ENCODE measurements at regions of chr20 and their contacts with region 1.

Region 1: DNA sequence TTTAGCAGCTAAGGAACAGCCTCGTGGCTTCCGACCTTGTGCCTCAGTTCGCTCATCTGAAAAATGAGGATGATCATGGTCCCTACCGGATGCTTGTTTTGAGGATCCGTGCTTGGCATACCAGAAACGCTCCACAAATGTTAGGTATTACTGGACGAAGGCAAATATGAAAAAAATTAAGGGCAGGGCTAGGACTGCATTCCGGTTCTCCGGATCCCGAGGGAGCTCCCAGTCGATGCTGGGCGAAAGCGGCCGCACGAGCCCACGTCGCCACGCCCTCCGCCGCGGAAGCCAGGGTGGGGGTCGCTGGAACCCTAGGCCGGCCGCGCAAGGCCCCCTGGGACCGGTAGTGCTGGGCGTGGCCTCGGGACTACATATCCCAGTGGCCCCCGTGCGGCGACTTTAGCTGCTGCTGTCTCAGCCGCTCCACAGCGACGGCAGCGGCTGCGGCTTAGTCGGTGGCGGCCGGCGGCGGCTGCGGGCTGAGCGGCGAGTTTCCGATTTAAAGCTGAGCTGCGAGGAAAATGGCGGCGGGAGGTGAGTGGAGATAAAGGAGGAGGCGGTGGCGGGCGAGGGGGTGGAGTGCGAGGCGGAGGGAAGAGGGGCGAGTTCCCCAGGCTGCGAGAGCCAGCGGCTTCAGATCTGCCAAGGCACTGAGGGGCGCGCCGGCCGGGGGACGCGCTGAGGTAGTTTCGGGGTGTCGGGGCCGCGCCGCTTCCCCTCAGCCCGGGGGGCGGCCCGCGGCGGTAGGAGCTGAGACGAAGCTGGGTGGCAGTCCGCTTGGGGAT is at the start of gene NCOA3:
- DNase-seq: peak; percentile 93
- ATAC-seq: peak; percentile 91
- H3K4me3 ChIP-seq: peak within 1 kb of the TSS; percentile 90 to 99 (median 97)
- H3K4me3 Mint-ChIP-seq: peak within 1 kb of the TSS; percentile 100
- H3K27ac ChIP-seq: peak within 1 kb of the TSS; percentile 90 to 95
- H3K27ac Mint-ChIP-seq: peak within 1 kb of the TSS; percentile 100
- H3K4me1 ChIP-seq: peaks cover 28 to 33% of the 10 kb centered on the region in 2 donors
- H3K4me1 Mint-ChIP-seq: peaks cover 48% of the 10 kb centered on the region
- H3K27me3 ChIP-seq: no peaks in the 10 kb centered on the region
- H3K27me3 Mint-ChIP-seq: no peaks in the 10 kb centered on the region
- CTCF ChIP-seq: peak; percentile 59
- total RNA-seq, gene NCOA3: 289 and 309 TPM in 2 replicates

Region 2: GRCh38 chr20:47196091-47197081 is 305.3 kb before region 1 on chr20:
- CTCF ChIA-PET with region 1: no interaction called
- POLR2A ChIA-PET with region 1: no interaction called
- intact Hi-C with region 1: loop called (anchors 10 kb)
- DNase-seq: peak; percentile 81
- ATAC-seq: peak; percentile 82
- H3K4me3 ChIP-seq: peak overlapping the region in 2 of 5 experiments; percentile 12 to 33
- H3K4me3 Mint-ChIP-seq: peak overlapping the region; percentile 16
- H3K27ac ChIP-seq: no peak overlapping the region
- H3K27ac Mint-ChIP-seq: no peak overlapping the region
- H3K4me1 ChIP-seq: peaks cover 3 to 7% of the 10 kb centered on the region in 2 donors
- H3K4me1 Mint-ChIP-seq: peaks cover 5% of the 10 kb centered on the region
- H3K27me3 ChIP-seq: no peaks in the 10 kb centered on the region
- H3K27me3 Mint-ChIP-seq: no peaks in the 10 kb centered on the region
- CTCF ChIP-seq: peak; percentile 100

Region 3: GRCh38 chr20:47418061-47418912 is 83.4 kb before region 1 on chr20:
- CTCF ChIA-PET with region 1: interaction called, 46 read pairs
- POLR2A ChIA-PET with region 1: interaction called, 56 read pairs
- intact Hi-C with region 1: loop called (anchors 1 kb)
- DNase-seq: no peak
- ATAC-seq: no peak
- H3K4me3 ChIP-seq: no peak overlapping the region
- H3K4me3 Mint-ChIP-seq: no peak overlapping the region
- H3K27ac ChIP-seq: peak overlapping the region; percentile 97 to 99
- H3K27ac Mint-ChIP-seq: peak overlapping the region; percentile 99
- H3K4me1 ChIP-seq: peaks cover 59 to 73% of the 10 kb centered on the region in 2 donors
- H3K4me1 Mint-ChIP-seq: peaks cover 67% of the 10 kb centered on the region
- H3K27me3 ChIP-seq: no peaks in the 10 kb centered on the region
- H3K27me3 Mint-ChIP-seq: no peaks in the 10 kb centered on the region
- CTCF ChIP-seq: no peak

Region 4: DNA sequence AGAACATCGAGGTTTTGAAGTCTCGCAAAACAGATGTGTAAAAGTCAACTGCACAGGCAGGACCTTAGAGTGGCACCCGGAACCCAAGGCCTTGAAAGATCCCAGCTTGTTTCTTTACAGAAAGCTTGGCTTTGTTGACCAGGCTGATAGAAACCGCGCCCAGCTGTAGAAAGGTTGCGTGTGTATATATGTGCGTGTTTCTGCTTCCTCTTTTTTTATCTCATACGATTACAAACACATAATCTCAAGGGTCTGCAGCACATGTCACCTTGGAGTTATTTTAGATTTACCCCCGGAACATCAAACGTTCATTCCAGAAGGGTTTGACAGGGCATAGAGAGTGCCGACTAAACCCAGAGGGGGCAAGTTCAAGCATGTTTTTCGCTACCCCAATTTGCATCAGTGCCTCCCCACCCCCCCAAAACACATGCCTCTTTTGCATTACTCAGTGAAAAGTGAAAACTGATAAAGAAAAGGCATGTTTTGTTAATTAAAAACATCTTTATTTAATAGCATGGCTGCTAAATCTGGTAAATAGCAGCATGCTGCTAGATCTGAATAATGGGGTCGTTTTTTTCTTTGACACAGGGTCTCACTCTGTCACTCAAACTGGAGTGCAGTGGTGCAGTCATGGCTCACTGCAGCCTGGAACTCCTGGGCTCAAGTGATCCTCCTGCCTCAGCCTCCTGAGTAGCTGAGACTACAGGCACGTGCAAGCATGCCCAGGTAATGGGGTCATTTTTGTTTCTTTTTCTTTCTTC is 33.2 kb before region 1 on chr20:
- CTCF ChIA-PET with region 1: interaction called, 7 read pairs
- POLR2A ChIA-PET with region 1: interaction called, 22 read pairs
- intact Hi-C with region 1: loop called (anchors 1 kb)
- DNase-seq: peak; percentile 84
- ATAC-seq: peak; percentile 81
- H3K4me3 ChIP-seq: peak overlapping the region in 2 of 5 experiments; percentile 8 to 38
- H3K4me3 Mint-ChIP-seq: peak overlapping the region; percentile 68
- H3K27ac ChIP-seq: peak overlapping the region; percentile 66 to 79
- H3K27ac Mint-ChIP-seq: peak overlapping the region; percentile 95
- H3K4me1 ChIP-seq: peaks cover 42 to 55% of the 10 kb centered on the region in 2 donors
- H3K4me1 Mint-ChIP-seq: peaks cover 48% of the 10 kb centered on the region
- H3K27me3 ChIP-seq: no peaks in the 10 kb centered on the region
- H3K27me3 Mint-ChIP-seq: no peaks in the 10 kb centered on the region
- CTCF ChIP-seq: no peak

Region 5: GRCh38 chr20:47561180-47561579 is 59.5 kb after region 1 on chr20:
- CTCF ChIA-PET with region 1: no interaction called
- POLR2A ChIA-PET with region 1: no interaction called
- intact Hi-C with region 1: loop called (anchors 5 kb)
- DNase-seq: no peak
- ATAC-seq: no peak
- H3K4me3 ChIP-seq: peak overlapping the region in 1 of 5 experiments; percentile 36
- H3K4me3 Mint-ChIP-seq: peak overlapping the region; percentile 50
- H3K27ac ChIP-seq: peak overlapping the region in 1 of 2 donors; percentile 51
- H3K27ac Mint-ChIP-seq: no peak overlapping the region
- H3K4me1 ChIP-seq: peaks cover 75 to 87% of the 10 kb centered on the region in 2 donors
- H3K4me1 Mint-ChIP-seq: peaks cover 88% of the 10 kb centered on the region
- H3K27me3 ChIP-seq: no peaks in the 10 kb centered on the region
- H3K27me3 Mint-ChIP-seq: no peaks in the 10 kb centered on the region
- CTCF ChIP-seq: no peak

Measured in B cell (primary cell).